Endothelial cell of umbilical vein (primary cell): ENCODE measurements at regions of chr22 and their contacts with region 1.

Region 1: GRCh38 chr22:45096256-45096907 is 67.3 kb upstream of the NUP50 start:
- DNase-seq: peak; percentile 57
- H3K4me3 ChIP-seq: no peak overlapping the region
- H3K27ac ChIP-seq: no peak overlapping the region
- H3K4me1 ChIP-seq: no peaks in the 10 kb centered on the region
- H3K27me3 ChIP-seq: no peaks in the 10 kb centered on the region
- CTCF ChIP-seq: peak; percentile 66 to 86
- POLR2A ChIP-seq: no peak

Region 2: GRCh38 chr22:44819971-44820631 is 276.3 kb before region 1 on chr22:
- CTCF ChIA-PET with region 1: interaction called, 36 read pairs
- POLR2A ChIA-PET with region 1: no interaction called
- dilution Hi-C with region 1: no loop called
- intact Hi-C with region 1: loop called (anchors 1 kb)
- DNase-seq: no peak
- H3K4me3 ChIP-seq: no peak overlapping the region
- H3K27ac ChIP-seq: no peak overlapping the region
- H3K4me1 ChIP-seq: no peaks in the 10 kb centered on the region
- H3K27me3 ChIP-seq: no peaks in the 10 kb centered on the region
- CTCF ChIP-seq: no peak
- POLR2A ChIP-seq: no peak

Region 3: GRCh38 chr22:44975427-44976262 is 120.7 kb before region 1 on chr22:
- CTCF ChIA-PET with region 1: interaction called, 10 read pairs
- POLR2A ChIA-PET with region 1: no interaction called
- dilution Hi-C with region 1: no loop called
- intact Hi-C with region 1: loop called (anchors 1 kb)
- DNase-seq: peak; percentile 58
- H3K4me3 ChIP-seq: no peak overlapping the region
- H3K27ac ChIP-seq: no peak overlapping the region
- H3K4me1 ChIP-seq: no peaks in the 10 kb centered on the region
- H3K27me3 ChIP-seq: no peaks in the 10 kb centered on the region
- CTCF ChIP-seq: peak; percentile 77 to 86
- POLR2A ChIP-seq: no peak

Region 4: DNA sequence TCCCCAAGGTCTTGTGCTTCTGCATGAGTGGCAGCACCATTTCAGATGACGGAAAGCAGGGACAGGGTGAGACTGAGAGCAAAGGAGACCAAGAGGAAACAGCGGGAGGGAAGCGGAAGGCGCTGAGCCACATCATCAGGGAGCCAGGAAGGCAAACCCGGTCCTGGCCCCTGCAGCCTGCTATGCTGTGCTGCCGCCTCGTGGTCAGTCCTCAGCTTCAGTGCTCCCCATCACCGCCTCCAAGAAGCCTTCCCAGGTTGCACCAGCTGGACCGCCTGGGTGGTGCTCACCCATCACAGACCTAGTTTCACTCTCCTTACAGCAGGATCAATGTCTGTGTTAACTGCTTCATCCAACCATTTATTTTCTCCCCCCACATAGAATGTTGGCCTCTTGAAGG is 13.6 kb before region 1 on chr22:
- CTCF ChIA-PET with region 1: interaction called, 15 read pairs
- POLR2A ChIA-PET with region 1: no interaction called
- dilution Hi-C with region 1: no loop called
- intact Hi-C with region 1: no loop called
- DNase-seq: no peak
- H3K4me3 ChIP-seq: no peak overlapping the region
- H3K27ac ChIP-seq: no peak overlapping the region
- H3K4me1 ChIP-seq: no peaks in the 10 kb centered on the region
- H3K27me3 ChIP-seq: no peaks in the 10 kb centered on the region
- CTCF ChIP-seq: peak; percentile 5 to 22
- POLR2A ChIP-seq: no peak

Region 5: GRCh38 chr22:45212306-45212709 is 115.9 kb after region 1 on chr22:
- CTCF ChIA-PET with region 1: no interaction called
- POLR2A ChIA-PET with region 1: no interaction called
- dilution Hi-C with region 1: no loop called
- intact Hi-C with region 1: no loop called
- DNase-seq: peak; percentile 89
- H3K4me3 ChIP-seq: peak overlapping the region in 2 of 3 experiments; percentile 14 to 51
- H3K27ac ChIP-seq: peak overlapping the region; percentile 26
- H3K4me1 ChIP-seq: peaks cover 12% of the 10 kb centered on the region
- H3K27me3 ChIP-seq: no peaks in the 10 kb centered on the region
- CTCF ChIP-seq: no peak
- POLR2A ChIP-seq: no peak